ENCODE measurements at regions of chr1 and their contacts with region 1.

Region 1: GRCh38 chr1:166910396-166910994 is 34.4 kb upstream of the TADA1 start:
- DNase-seq: peak; percentile 89
- ATAC-seq: peak; percentile 94
- H3K4me3 Mint-ChIP-seq: no peak overlapping the region
- H3K27ac Mint-ChIP-seq: no peak overlapping the region
- H3K4me1 Mint-ChIP-seq: peaks cover 14% of the 10 kb centered on the region
- H3K27me3 Mint-ChIP-seq: peaks cover 4% of the 10 kb centered on the region
- CTCF ChIP-seq: peak; percentile 82

Region 2: GRCh38 chr1:166855558-166855957 is 54.9 kb before region 1 on chr1:
- CTCF ChIA-PET with region 1: no interaction called
- POLR2A ChIA-PET with region 1: no interaction called
- intact Hi-C with region 1: no loop called
- DNase-seq: no peak
- ATAC-seq: no peak
- H3K4me3 Mint-ChIP-seq: no peak overlapping the region
- H3K27ac Mint-ChIP-seq: peak overlapping the region; percentile 53
- H3K4me1 Mint-ChIP-seq: peaks cover 29% of the 10 kb centered on the region
- H3K27me3 Mint-ChIP-seq: no peaks in the 10 kb centered on the region
- CTCF ChIP-seq: no peak

Region 3: DNA sequence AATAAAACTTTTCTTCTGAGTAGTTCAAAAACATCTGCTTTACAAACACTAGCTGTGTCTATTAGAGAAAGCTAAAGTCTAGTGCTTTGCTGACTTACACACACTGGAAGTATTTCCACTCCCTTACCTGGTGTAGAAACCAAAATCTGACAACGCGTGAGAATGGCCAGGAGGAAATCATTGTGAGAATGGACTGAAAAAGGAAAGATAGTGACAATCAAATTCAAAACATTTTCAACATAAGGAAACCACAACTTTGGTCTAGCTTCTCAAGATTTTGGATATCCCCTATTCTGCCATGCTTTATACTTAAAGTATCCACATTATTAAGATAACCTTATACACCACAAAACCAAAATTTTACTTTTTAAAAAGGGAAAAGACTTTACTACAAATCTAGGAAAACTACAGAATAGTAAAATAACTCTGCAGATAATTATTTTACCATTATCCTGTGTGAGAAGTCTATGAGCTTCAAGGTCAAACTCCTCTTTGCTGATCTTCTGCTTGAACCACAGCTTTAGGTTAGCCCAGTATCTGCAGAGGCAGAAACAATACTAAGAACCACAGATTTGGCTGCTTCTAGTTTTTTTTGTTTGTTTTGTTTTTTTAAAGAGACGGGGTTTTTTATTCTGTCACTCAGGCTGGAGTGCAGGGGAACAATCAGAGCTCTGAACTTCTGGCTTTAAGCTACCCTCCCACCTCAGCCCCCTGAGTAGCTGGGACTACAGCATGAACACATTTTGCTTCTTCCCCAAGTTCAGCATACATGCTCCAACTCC is 41.0 kb before region 1 on chr1:
- CTCF ChIA-PET with region 1: no interaction called
- POLR2A ChIA-PET with region 1: no interaction called
- intact Hi-C with region 1: no loop called
- DNase-seq: no peak
- ATAC-seq: peak; percentile 45
- H3K4me3 Mint-ChIP-seq: no peak overlapping the region
- H3K27ac Mint-ChIP-seq: peak overlapping the region; percentile 69
- H3K4me1 Mint-ChIP-seq: peaks cover 49% of the 10 kb centered on the region
- H3K27me3 Mint-ChIP-seq: no peaks in the 10 kb centered on the region
- CTCF ChIP-seq: no peak

Region 4: DNA sequence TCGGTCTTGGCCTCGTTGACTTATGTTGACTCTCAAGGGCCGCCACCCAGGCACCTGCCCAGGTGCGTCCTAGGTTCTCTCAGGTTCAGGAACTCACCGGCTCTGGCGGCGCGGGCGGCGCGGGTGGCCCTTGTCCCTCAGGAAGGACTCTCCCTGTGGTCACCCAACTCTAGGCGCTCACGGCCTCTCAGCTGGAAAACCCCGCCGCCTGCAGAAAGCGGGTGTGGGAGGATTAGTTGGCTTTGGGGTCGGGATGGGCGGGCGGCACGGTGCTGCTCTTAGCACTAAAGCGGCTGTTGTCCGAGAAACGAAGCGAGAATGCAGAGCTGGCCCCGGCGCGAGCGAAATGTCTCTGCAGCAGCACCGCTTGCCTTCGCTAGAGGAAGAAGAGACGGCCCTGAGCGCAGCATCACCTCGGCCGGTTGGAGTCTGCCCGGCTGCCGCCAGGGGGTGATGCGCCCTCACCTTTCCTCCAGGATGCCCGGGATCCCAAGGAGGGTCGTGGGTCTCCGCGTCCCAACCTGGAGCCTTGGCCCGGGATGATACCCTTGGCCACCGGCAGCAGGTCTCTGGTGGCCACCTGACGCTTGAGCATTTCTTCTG is 26.4 kb before region 1 on chr1:
- CTCF ChIA-PET with region 1: interaction called, 24 read pairs
- POLR2A ChIA-PET with region 1: no interaction called
- intact Hi-C with region 1: no loop called
- DNase-seq: peak; percentile 58
- ATAC-seq: peak; percentile 79
- H3K4me3 Mint-ChIP-seq: no peak overlapping the region
- H3K27ac Mint-ChIP-seq: no peak overlapping the region
- H3K4me1 Mint-ChIP-seq: peaks cover 11% of the 10 kb centered on the region
- H3K27me3 Mint-ChIP-seq: peaks cover 24% of the 10 kb centered on the region
- CTCF ChIP-seq: peak; percentile 75

Region 5: GRCh38 chr1:166927701-166928100 is 17.2 kb after region 1 on chr1:
- CTCF ChIA-PET with region 1: interaction called, 23 read pairs
- POLR2A ChIA-PET with region 1: no interaction called
- intact Hi-C with region 1: no loop called
- DNase-seq: no peak
- ATAC-seq: no peak
- H3K4me3 Mint-ChIP-seq: no peak overlapping the region
- H3K27ac Mint-ChIP-seq: no peak overlapping the region
- H3K4me1 Mint-ChIP-seq: no peaks in the 10 kb centered on the region
- H3K27me3 Mint-ChIP-seq: peaks cover under 1% of the 10 kb centered on the region
- CTCF ChIP-seq: no peak

Region 6: GRCh38 chr1:166969074-166969677 is 58.7 kb after region 1 on chr1:
- CTCF ChIA-PET with region 1: interaction called, 31 read pairs
- POLR2A ChIA-PET with region 1: no interaction called
- intact Hi-C with region 1: no loop called
- DNase-seq: peak; percentile 35
- ATAC-seq: peak; percentile 72
- H3K4me3 Mint-ChIP-seq: no peak overlapping the region
- H3K27ac Mint-ChIP-seq: peak overlapping the region; percentile 1
- H3K4me1 Mint-ChIP-seq: peaks cover 41% of the 10 kb centered on the region
- H3K27me3 Mint-ChIP-seq: peaks cover 24% of the 10 kb centered on the region
- CTCF ChIP-seq: no peak

Region 7: DNA sequence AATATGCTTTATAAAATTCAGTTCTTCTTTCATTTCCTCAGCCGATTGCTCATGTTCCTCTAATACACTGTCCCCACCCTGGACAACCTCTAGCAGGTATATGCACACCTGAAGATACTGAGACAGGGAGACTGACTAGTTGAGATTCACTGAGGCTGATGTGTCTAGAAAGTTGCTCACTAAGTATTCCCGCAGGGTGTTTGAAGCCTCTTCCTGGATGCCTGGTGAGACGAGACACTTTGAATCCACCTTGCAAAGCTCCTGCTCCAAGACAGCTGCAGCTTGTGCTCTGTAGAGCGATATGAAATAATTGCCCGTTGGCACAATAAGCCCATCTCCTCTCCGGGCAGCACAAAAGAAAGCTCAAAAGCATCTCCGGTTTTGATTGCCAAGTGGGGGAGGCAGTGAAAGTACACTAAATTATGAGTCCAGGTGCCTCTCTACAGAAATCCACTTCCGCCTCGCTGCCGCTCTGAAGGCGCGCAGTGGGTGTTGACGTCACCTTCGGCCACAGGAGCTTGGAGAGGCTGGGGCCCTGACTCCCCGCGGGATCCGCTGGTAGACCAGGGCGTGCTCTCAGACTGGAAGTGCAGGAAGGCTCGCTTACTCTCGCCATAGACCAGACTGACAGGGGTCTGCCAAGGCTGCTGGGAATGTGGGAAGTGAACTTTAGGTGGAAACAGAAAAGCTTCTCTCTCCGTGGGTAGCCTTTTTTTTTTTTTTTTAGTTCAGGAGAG is 133.4 kb after region 1 on chr1:
- CTCF ChIA-PET with region 1: interaction called, 30 read pairs
- POLR2A ChIA-PET with region 1: no interaction called
- intact Hi-C with region 1: no loop called
- DNase-seq: peak; percentile 91
- ATAC-seq: peak; percentile 99
- H3K4me3 Mint-ChIP-seq: peak overlapping the region; percentile 78
- H3K27ac Mint-ChIP-seq: peak overlapping the region; percentile 85
- H3K4me1 Mint-ChIP-seq: peaks cover 18% of the 10 kb centered on the region
- H3K27me3 Mint-ChIP-seq: peaks cover 5% of the 10 kb centered on the region
- CTCF ChIP-seq: no peak

Region 8: GRCh38 chr1:167121375-167122120 is 211.1 kb after region 1 on chr1:
- CTCF ChIA-PET with region 1: interaction called, 17 read pairs
- POLR2A ChIA-PET with region 1: no interaction called
- intact Hi-C with region 1: no loop called
- DNase-seq: peak; percentile 31
- ATAC-seq: peak; percentile 63
- H3K4me3 Mint-ChIP-seq: peak overlapping the region; percentile 70
- H3K27ac Mint-ChIP-seq: peak overlapping the region; percentile 12
- H3K4me1 Mint-ChIP-seq: no peaks in the 10 kb centered on the region
- H3K27me3 Mint-ChIP-seq: peaks cover 7% of the 10 kb centered on the region
- CTCF ChIP-seq: no peak

Region 9: DNA sequence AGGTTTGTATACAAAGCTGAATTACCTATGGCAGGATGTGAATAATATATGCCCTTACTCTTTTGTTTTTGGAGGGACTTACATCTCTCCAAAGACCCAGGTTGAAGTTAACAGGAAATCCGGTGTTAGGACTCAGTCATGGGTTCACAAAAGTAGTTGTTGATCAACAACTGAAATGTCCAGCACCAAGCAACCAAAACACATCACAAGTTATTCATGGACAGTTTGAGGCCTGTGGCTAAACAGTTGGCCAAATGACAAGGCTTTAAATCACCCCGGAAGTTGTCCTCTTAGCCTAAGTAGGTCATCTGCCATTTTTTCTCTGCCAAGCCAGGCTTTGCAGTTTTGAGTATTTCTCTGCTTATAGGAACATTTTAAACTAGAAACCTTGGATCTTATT is 517.9 kb after region 1 on chr1:
- CTCF ChIA-PET with region 1: no interaction called
- POLR2A ChIA-PET with region 1: no interaction called
- intact Hi-C with region 1: no loop called
- DNase-seq: no peak
- ATAC-seq: peak; percentile 28
- H3K4me3 Mint-ChIP-seq: no peak overlapping the region
- H3K27ac Mint-ChIP-seq: peak overlapping the region; percentile 77
- H3K4me1 Mint-ChIP-seq: peaks cover 33% of the 10 kb centered on the region
- H3K27me3 Mint-ChIP-seq: no peaks in the 10 kb centered on the region
- CTCF ChIP-seq: no peak